Panc1 (cell line): ENCODE measurements at regions of chr9 and their contacts with region 1.

Region 1: DNA sequence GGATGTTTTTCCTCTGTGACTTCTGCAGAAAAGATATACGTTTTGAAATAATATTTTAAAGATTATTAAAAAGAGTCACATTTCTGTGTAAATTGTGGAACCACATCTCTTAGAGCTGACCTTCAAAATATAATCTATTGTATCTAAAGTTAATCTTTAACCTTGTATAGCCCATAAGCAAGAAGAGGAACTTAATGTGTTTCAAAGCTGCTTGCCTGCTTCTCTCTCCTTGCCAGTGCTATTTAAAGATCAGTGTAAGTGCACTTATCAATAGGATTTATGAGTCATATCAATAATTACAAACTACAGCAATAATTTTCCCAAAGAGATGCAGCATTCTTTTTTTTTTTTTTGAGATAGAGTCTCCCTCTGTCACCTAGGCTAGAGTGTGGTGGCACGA is 29.4 kb upstream of the GDA start:
- DNase-seq: no peak
- ATAC-seq: no peak
- H3K4me3 ChIP-seq: no peak overlapping the region
- H3K27ac ChIP-seq: no peak overlapping the region
- H3K4me1 ChIP-seq: no peaks in the 10 kb centered on the region
- H3K27me3 ChIP-seq: no peaks in the 10 kb centered on the region
- CTCF ChIP-seq: no peak

Region 2: DNA sequence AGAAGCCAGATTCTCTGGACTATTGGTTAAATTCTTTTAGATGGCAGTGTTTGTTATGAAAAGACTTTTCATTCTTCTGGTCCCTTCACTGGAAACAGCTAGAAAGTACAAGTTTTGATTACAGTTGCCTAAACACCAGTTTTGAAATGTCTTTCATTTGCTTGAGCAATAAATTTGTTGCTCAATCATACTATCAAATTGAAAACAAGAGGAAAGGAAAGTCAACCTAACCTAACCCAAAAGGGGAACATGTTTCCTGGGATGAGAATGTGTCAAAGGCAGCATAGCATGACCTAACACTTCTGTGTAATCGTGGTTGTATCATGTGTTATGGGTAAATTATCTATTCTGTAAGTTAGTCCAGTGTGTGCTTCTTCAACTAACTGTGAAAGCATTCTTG is 614.8 kb after region 1 on chr9:
- CTCF ChIA-PET with region 1: no interaction called
- POLR2A ChIA-PET with region 1: interaction called, 18 read pairs
- in situ Hi-C with region 1: no loop called
- intact Hi-C with region 1: no loop called
- DNase-seq: no peak
- ATAC-seq: no peak
- H3K4me3 ChIP-seq: no peak overlapping the region
- H3K27ac ChIP-seq: no peak overlapping the region
- H3K4me1 ChIP-seq: no peaks in the 10 kb centered on the region
- H3K27me3 ChIP-seq: no peaks in the 10 kb centered on the region
- CTCF ChIP-seq: no peak